B cell (primary cell): ENCODE measurements at regions of chr13 and their contacts with region 1.

Region 1: DNA sequence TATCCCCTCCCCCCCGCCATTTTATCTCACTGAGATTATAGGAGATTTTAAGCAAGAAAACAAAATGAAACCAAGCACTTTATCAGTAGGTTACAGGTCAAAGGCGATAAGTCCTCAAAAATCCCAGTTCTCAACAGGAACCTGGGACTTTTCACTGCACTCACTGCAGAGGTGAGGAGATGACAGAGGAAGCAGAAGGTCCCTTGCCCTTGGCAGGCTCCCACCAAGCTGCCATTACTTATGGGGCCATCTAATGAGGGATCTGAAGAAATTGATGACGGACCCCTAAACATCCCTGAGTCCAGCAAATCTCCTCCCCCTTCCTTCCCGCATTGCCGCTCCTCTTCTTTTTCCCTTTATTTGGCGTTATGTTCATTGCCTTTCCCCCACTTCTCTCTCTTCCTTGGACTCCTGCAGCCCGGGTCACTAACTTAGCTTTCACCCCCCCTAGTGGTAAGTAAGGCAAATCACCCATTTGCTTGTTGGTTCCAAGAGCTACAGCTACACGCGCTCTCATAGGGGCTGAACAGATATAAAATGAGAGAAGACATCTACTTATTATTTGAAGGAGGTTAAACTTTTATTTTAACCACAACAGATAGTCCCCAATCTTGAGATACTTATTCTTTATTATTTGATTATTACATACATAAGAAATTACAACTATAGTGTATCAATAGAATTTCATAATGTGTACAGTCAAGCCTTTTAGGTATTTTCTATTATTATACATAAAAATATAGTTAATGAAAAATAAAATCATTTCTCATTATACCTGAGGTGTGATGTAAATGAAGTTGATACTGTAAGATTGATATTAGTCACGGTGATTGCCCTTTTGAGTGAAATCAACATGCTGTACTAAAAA is 52.0 kb upstream of the ARGLU1 start:
- DNase-seq: peak; percentile 44
- ATAC-seq: peak; percentile 58
- H3K4me3 ChIP-seq: no peak overlapping the region
- H3K4me3 Mint-ChIP-seq: no peak overlapping the region
- H3K27ac ChIP-seq: no peak overlapping the region
- H3K27ac Mint-ChIP-seq: no peak overlapping the region
- H3K4me1 ChIP-seq: no peaks in the 10 kb centered on the region
- H3K4me1 Mint-ChIP-seq: peaks cover 2% of the 10 kb centered on the region
- H3K27me3 ChIP-seq: peaks cover 0 to 13% (median 3%) of the 10 kb centered on the region in 4 experiments
- H3K27me3 Mint-ChIP-seq: peaks cover 24% of the 10 kb centered on the region
- CTCF ChIP-seq: peak; percentile 73

Region 2: DNA sequence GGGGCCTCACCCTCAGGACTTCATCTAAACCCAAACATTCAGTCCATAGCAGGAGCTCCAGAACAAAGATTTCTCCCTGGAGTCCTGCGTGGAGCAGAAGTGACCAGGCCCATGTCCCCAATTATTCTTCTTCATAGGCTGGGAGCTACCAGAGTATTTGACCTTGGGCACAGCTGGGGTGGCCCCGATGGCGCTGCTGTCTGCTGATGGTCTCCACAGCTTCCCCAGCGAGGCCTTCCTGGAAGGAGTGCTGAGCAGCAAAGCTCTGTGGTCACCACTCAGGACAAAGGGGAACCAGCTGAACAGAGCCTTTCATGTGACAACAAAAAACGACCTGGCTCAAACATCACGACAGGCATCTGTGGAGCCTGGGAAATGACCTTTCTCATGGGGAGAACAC is 10.7 kb after region 1 on chr13:
- CTCF ChIA-PET with region 1: interaction called, 14 read pairs
- POLR2A ChIA-PET with region 1: no interaction called
- intact Hi-C with region 1: no loop called
- DNase-seq: no peak
- ATAC-seq: no peak
- H3K4me3 ChIP-seq: no peak overlapping the region
- H3K4me3 Mint-ChIP-seq: no peak overlapping the region
- H3K27ac ChIP-seq: no peak overlapping the region
- H3K27ac Mint-ChIP-seq: no peak overlapping the region
- H3K4me1 ChIP-seq: no peaks in the 10 kb centered on the region
- H3K4me1 Mint-ChIP-seq: no peaks in the 10 kb centered on the region
- H3K27me3 ChIP-seq: no peaks in the 10 kb centered on the region
- H3K27me3 Mint-ChIP-seq: peaks cover 18% of the 10 kb centered on the region
- CTCF ChIP-seq: no peak